MCF 10A (cell line): ENCODE measurements at regions of chr1 and their contacts with region 1.

Region 1: DNA sequence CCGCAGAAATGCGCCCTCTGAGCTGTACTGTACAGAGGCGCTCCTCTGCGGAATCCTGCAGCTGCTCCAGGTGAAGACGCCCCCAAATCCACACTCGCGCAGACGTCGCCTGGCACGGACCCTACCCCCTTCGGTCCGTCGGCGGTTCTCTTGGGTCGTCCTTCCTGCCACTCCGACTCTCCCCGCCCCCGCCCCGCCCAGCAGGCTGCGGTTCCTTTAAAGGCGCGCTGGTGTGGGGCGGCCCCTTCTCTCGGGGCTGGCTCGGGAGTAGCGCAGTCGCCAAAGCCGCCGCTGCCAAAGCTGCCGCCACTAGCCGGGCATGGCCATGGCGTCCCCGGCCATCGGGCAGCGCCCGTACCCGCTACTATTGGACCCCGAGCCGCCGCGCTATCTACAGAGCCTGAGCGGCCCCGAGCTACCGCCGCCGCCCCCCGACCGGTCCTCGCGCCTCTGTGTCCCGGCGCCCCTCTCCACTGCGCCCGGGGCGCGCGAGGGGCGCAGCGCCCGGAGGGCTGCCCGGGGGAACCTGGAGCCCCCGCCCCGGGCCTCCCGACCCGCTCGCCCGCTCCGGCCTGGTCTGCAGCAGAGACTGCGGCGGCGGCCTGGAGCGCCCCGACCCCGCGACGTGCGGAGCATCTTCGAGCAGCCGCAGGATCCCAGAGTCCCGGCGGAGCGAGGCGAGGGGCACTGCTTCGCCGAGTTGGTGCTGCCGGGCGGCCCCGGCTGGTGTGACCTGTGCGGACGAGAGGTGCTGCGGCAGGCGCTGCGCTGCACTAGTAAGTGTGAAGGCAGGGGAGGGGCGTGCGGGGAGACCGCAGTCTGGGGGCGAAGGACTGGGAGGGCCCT is at the start of gene RASSF5:
- DNase-seq: peak; percentile 87
- H3K4me3 Mint-ChIP-seq: peak within 1 kb of the TSS; percentile 72
- H3K27ac Mint-ChIP-seq: peak within 1 kb of the TSS; percentile 72
- H3K4me1 Mint-ChIP-seq: peaks cover 74% of the 10 kb centered on the region
- H3K27me3 Mint-ChIP-seq: no peaks in the 10 kb centered on the region
- CTCF ChIP-seq: no peak
- total RNA-seq, gene RASSF5: 8.3 and 9.6 TPM in 2 replicates

Region 2: GRCh38 chr1:206537141-206537540 is 29.6 kb after region 1 on chr1:
- CTCF ChIA-PET with region 1: interaction called, 145 read pairs
- POLR2A ChIA-PET with region 1: interaction called, 11 read pairs
- intact Hi-C with region 1: no loop called
- DNase-seq: no peak
- H3K4me3 Mint-ChIP-seq: no peak overlapping the region
- H3K27ac Mint-ChIP-seq: no peak overlapping the region
- H3K4me1 Mint-ChIP-seq: no peaks in the 10 kb centered on the region
- H3K27me3 Mint-ChIP-seq: no peaks in the 10 kb centered on the region
- CTCF ChIP-seq: no peak

Region 3: DNA sequence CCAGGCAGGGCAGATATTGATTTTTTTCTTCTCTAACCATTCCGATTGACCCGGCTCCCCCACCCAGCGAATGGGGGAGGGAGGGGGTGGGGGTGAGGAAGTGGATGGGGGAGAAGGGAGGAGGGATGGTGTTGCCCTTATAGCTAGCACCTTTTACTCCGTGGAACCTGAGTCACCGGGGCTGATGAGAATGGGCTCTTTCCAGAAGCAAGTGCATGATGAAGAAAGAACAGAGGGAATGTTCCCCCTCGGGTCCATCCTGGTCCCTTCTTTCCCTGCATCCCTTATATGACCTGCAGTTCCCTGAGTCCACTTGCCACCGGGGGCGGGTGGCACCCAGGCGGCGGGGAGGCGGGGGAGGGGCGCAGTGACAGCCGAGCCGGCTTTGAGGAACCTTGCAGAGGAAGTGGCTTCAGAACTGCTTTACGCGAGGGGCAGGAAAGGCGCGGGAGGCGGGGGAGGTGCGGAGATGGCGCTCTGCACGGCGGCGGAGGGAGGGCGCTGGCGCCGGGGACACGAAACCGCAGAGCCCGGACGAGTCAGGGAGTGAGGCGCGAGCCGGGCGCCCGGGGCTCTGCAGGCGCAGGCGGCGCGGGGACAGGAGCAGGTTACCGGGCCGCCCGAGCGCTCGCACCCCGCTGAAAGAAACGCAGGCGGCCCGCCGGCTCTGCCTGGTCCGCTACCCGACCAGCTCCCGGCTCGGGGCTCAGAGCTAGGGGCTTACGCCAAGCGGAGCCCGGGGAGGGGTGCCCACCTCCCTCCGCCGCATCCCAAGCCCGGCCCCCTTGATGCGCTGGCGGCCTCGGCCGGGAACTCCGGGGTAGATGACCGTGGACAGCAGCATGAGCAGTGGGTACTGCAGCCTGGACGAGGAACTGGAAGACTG is 49.5 kb after region 1 on chr1:
- CTCF ChIA-PET with region 1: interaction called, 18 read pairs
- POLR2A ChIA-PET with region 1: interaction called, 5 read pairs
- intact Hi-C with region 1: no loop called
- DNase-seq: peak; percentile 66
- H3K4me3 Mint-ChIP-seq: peak overlapping the region; percentile 68
- H3K27ac Mint-ChIP-seq: no peak overlapping the region
- H3K4me1 Mint-ChIP-seq: no peaks in the 10 kb centered on the region
- H3K27me3 Mint-ChIP-seq: no peaks in the 10 kb centered on the region
- CTCF ChIP-seq: no peak

Region 4: GRCh38 chr1:207128336-207128921 is 620.9 kb after region 1 on chr1:
- CTCF ChIA-PET with region 1: no interaction called
- POLR2A ChIA-PET with region 1: no interaction called
- intact Hi-C with region 1: no loop called
- DNase-seq: no peak
- H3K4me3 Mint-ChIP-seq: no peak overlapping the region
- H3K27ac Mint-ChIP-seq: no peak overlapping the region
- H3K4me1 Mint-ChIP-seq: no peaks in the 10 kb centered on the region
- H3K27me3 Mint-ChIP-seq: no peaks in the 10 kb centered on the region
- CTCF ChIP-seq: no peak